CD4-positive, alpha-beta T cell (primary cell): ENCODE measurements at regions of chr16 and their contacts with region 1.

Region 1: DNA sequence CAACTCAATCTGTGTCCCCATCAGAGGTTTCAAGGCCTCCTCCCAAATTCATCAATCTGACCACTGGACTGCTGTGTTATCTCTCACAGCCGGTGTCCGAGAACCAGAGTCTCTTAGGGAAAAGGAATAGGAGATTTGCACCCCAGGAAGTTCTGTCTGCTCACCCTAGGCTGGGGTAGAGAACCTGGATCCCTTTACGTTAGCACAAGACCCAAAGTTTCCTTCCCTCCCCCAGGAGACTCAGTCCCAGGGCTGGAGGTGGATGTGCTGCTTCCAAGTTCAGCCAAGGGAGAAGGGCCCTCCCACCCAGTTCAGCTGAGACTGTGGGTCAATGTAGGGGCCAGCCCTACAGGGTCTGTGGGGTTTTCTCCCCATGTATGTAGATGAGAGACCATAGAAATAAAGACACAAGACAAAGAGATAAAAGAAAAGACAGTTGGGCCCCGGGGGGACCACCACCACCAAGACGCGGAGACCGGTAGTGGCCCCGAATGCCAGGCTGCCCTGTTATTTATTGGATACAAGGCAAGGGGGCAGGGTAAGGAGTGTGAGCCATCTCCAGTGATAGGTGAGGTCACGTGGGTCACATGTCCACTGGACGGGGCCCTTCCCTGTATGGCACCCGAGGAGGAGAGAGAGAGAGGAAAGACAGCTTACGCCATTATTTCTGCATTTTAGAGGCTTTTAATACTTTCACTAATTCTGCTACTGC is 22.7 kb upstream of the OR1F1 start:
- DNase-seq: no peak
- ATAC-seq: no peak
- H3K4me3 ChIP-seq: peak overlapping the region; percentile 21
- H3K4me3 Mint-ChIP-seq: peak overlapping the region; percentile 74
- H3K27ac ChIP-seq: no peak overlapping the region
- H3K27ac Mint-ChIP-seq: peak overlapping the region; percentile 56
- H3K4me1 ChIP-seq: peaks cover 11% of the 10 kb centered on the region
- H3K4me1 Mint-ChIP-seq: peaks cover 11% of the 10 kb centered on the region
- H3K27me3 ChIP-seq: peaks cover 5 to 7% of the 10 kb centered on the region in 2 experiments
- H3K27me3 Mint-ChIP-seq: no peaks in the 10 kb centered on the region
- CTCF ChIP-seq: no peak

Region 2: DNA sequence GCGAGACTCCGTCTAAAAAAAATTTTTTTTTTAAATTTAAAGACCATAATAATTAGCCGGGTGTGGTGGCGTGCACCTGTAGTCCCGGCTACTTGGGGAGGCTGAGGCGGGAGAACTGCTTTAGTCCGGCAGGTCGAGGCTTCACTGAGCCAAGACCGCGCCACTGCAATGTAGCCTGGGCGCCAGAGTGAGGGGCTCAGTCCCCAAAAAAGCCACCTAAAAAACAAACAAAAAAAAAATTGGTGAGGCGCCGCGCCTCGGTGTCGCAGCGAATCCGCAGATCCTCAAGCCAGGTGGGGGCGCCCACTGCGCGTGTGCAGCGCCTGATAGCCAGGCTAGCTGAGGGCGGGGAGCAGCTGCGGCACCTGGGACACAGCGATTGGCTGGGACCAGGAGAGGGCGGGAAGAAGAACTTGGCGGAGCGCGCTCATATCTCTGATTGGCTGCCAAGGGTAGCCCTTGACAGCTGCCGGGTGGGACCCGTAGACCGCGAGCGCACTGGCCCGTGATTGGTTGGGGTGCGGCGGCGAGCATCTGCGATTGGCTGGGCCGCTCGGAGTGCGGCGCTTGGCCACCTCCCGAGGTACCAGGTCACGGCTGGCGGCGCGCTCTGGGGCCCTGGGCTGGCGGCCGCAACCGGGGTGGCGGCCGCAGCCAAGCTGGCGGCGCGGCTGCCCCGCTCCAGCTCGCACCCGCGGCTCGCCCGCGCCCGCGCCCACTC is 161.5 kb before region 1 on chr16:
- CTCF ChIA-PET with region 1: no interaction called
- POLR2A ChIA-PET with region 1: no interaction called
- intact Hi-C with region 1: loop called in 1 of 2 experiments (anchors 5 kb)
- DNase-seq: peak; percentile 90 to 99 (median 95)
- ATAC-seq: peak; percentile 99
- H3K4me3 ChIP-seq: no peak overlapping the region
- H3K4me3 Mint-ChIP-seq: peak overlapping the region; percentile 67
- H3K27ac ChIP-seq: no peak overlapping the region
- H3K27ac Mint-ChIP-seq: peak overlapping the region; percentile 13
- H3K4me1 ChIP-seq: peaks cover 32% of the 10 kb centered on the region
- H3K4me1 Mint-ChIP-seq: peaks cover 31% of the 10 kb centered on the region
- H3K27me3 ChIP-seq: peaks cover 0 to 3% of the 10 kb centered on the region in 2 experiments
- H3K27me3 Mint-ChIP-seq: peaks cover 27% of the 10 kb centered on the region
- CTCF ChIP-seq: peak; percentile 64

Region 3: DNA sequence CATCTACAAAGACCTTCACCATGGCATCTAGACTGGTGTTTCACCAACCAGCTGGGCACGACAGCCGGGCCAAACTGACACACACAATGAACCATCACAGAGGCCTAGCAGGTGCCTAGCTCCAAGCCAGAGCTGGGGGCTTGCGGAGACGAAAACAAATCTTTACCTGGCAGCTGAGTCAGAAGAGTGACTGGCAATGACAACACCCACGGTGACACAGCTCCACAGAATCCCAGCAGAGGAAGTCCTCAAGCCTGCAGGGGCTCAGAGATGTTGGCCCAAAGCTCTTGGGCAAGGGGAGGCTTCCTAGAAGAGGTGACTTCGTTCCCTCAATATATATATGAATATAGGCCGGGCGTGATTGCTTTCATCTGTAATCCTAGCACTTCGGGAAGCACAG is 113.8 kb before region 1 on chr16:
- CTCF ChIA-PET with region 1: no interaction called
- POLR2A ChIA-PET with region 1: no interaction called
- intact Hi-C with region 1: no loop called
- DNase-seq: no peak
- ATAC-seq: no peak
- H3K4me3 ChIP-seq: no peak overlapping the region
- H3K4me3 Mint-ChIP-seq: no peak overlapping the region
- H3K27ac ChIP-seq: no peak overlapping the region
- H3K27ac Mint-ChIP-seq: no peak overlapping the region
- H3K4me1 ChIP-seq: peaks cover 37% of the 10 kb centered on the region
- H3K4me1 Mint-ChIP-seq: peaks cover 37% of the 10 kb centered on the region
- H3K27me3 ChIP-seq: peaks cover 6 to 10% of the 10 kb centered on the region in 2 experiments
- H3K27me3 Mint-ChIP-seq: peaks cover 8% of the 10 kb centered on the region
- CTCF ChIP-seq: no peak

Region 4: DNA sequence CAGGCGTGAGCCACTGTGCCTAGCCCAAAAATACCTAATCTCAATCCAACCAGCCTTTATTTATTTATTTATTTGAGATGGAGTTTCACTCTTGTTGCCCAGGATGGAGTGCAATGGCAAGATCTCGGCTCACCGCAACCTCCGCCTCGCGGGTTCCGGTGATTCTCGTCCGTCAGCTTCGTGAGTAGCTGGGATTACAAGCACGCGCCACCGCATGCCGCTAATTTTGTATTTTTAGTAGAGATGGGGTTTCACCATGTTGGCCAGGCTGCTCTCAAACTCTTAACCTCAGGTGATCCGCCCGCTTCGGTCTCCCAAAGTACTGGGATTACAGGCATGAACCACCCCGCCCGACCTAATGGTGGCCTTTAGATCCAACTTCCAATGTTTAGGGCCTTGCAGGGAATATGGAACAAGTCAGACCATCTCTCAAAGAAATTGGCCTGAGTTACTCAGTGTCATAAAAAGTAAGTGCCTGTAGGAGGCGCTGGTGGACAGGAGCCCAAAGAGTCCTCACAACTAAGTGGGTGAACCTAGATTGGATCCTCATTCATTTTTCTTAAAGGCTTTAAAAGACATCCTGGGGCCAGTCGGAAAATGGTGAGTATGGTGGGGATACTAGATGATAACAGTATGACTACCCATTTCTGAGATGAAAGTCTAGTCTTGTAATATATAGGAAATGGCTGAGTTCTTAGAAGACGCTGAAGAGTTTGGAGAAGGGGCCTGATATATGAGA is 70.8 kb before region 1 on chr16:
- CTCF ChIA-PET with region 1: no interaction called
- POLR2A ChIA-PET with region 1: no interaction called
- intact Hi-C with region 1: loop called in 1 of 2 experiments (anchors 2 kb)
- DNase-seq: peak in 10 of 14 experiments; percentile 24 to 83 (median 48)
- ATAC-seq: peak; percentile 55
- H3K4me3 ChIP-seq: no peak overlapping the region
- H3K4me3 Mint-ChIP-seq: peak overlapping the region; percentile 3
- H3K27ac ChIP-seq: no peak overlapping the region
- H3K27ac Mint-ChIP-seq: peak overlapping the region; percentile 51
- H3K4me1 ChIP-seq: peaks cover 68% of the 10 kb centered on the region
- H3K4me1 Mint-ChIP-seq: peaks cover 50% of the 10 kb centered on the region
- H3K27me3 ChIP-seq: no peaks in the 10 kb centered on the region
- H3K27me3 Mint-ChIP-seq: no peaks in the 10 kb centered on the region
- CTCF ChIP-seq: peak; percentile 61